MCF 10A (cell line): ENCODE measurements at regions of chr7 and their contacts with region 1.

Region 1: GRCh38 chr7:120792091-120792860 is 65.7 kb downstream of the TSPAN12 start:
- DNase-seq: peak; percentile 76
- H3K4me3 Mint-ChIP-seq: no peak overlapping the region
- H3K27ac Mint-ChIP-seq: no peak overlapping the region
- H3K4me1 Mint-ChIP-seq: peaks cover 11% of the 10 kb centered on the region
- H3K27me3 Mint-ChIP-seq: peaks cover 27% of the 10 kb centered on the region
- CTCF ChIP-seq: peak; percentile 84

Region 2: GRCh38 chr7:120813089-120813488 is 20.8 kb after region 1 on chr7:
- CTCF ChIA-PET with region 1: interaction called, 112 read pairs
- POLR2A ChIA-PET with region 1: no interaction called
- intact Hi-C with region 1: no loop called
- DNase-seq: no peak
- H3K4me3 Mint-ChIP-seq: no peak overlapping the region
- H3K27ac Mint-ChIP-seq: no peak overlapping the region
- H3K4me1 Mint-ChIP-seq: no peaks in the 10 kb centered on the region
- H3K27me3 Mint-ChIP-seq: peaks cover 64% of the 10 kb centered on the region
- CTCF ChIP-seq: no peak

Region 3: DNA sequence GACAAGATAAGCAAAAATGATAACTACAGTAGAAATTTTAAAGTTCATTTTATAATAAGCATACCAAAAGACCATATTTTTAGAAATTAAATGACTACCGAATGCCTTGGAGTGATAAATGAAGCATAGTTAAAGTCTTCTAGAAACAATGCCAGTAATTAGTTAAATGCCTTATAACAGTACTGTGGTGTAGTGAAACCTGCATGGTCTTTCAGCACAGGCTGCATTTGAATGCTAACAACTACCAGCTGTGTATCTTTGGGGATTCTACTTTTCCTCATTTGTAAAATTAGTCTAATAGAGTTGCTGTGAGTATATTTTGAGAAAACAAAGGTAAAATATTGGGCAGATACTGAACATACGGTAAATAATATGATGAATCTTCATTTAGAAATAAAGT is 40.5 kb after region 1 on chr7:
- CTCF ChIA-PET with region 1: no interaction called
- POLR2A ChIA-PET with region 1: no interaction called
- intact Hi-C with region 1: no loop called
- DNase-seq: no peak
- H3K4me3 Mint-ChIP-seq: no peak overlapping the region
- H3K27ac Mint-ChIP-seq: no peak overlapping the region
- H3K4me1 Mint-ChIP-seq: no peaks in the 10 kb centered on the region
- H3K27me3 Mint-ChIP-seq: peaks cover 77% of the 10 kb centered on the region
- CTCF ChIP-seq: no peak

Region 4: GRCh38 chr7:120857588-120858573 is 65.6 kb after region 1 on chr7 and contains the start of gene TSPAN12:
- CTCF ChIA-PET with region 1: no interaction called
- POLR2A ChIA-PET with region 1: no interaction called
- intact Hi-C with region 1: loop called (anchors 2 kb)
- DNase-seq: peak; percentile 52
- H3K4me3 Mint-ChIP-seq: peak within 1 kb of the TSS; percentile 80
- H3K27ac Mint-ChIP-seq: no peak within 1 kb of the TSS
- H3K4me1 Mint-ChIP-seq: no peaks in the 10 kb centered on the region
- H3K27me3 Mint-ChIP-seq: peaks cover 98% of the 10 kb centered on the region
- CTCF ChIP-seq: peak; percentile 35
- total RNA-seq, gene TSPAN12: not detected in 2 replicates

Region 5: DNA sequence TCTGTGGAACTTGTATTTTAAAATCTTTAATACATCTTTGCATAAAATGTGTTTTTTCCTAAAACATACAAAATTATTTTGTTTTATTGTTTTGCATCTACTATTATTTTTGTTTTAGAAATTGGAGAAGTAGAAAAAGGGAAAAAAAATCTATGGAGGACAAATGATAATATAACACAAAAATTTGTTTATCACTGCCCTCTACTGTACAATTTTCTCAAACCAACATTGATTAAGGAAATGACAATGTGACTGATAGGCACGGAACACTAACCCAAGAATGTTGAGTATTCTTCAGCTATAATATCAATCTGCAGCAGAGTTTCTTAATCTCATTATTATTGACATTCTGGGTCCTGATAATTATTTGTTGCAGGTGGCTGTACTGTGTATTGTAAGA is 148.8 kb after region 1 on chr7:
- CTCF ChIA-PET with region 1: interaction called, 9 read pairs
- POLR2A ChIA-PET with region 1: no interaction called
- intact Hi-C with region 1: loop called (anchors 2 kb)
- DNase-seq: peak; percentile 16
- H3K4me3 Mint-ChIP-seq: no peak overlapping the region
- H3K27ac Mint-ChIP-seq: no peak overlapping the region
- H3K4me1 Mint-ChIP-seq: no peaks in the 10 kb centered on the region
- H3K27me3 Mint-ChIP-seq: peaks cover 80% of the 10 kb centered on the region
- CTCF ChIP-seq: no peak

Region 6: GRCh38 chr7:121081327-121081936 is 289.2 kb after region 1 on chr7:
- CTCF ChIA-PET with region 1: interaction called, 30 read pairs
- POLR2A ChIA-PET with region 1: no interaction called
- intact Hi-C with region 1: no loop called
- DNase-seq: peak; percentile 71
- H3K4me3 Mint-ChIP-seq: no peak overlapping the region
- H3K27ac Mint-ChIP-seq: no peak overlapping the region
- H3K4me1 Mint-ChIP-seq: peaks cover 29% of the 10 kb centered on the region
- H3K27me3 Mint-ChIP-seq: no peaks in the 10 kb centered on the region
- CTCF ChIP-seq: peak; percentile 52

Region 7: GRCh38 chr7:121107923-121108498 is 315.7 kb after region 1 on chr7:
- CTCF ChIA-PET with region 1: interaction called, 10 read pairs
- POLR2A ChIA-PET with region 1: no interaction called
- intact Hi-C with region 1: loop called (anchors 2 kb)
- DNase-seq: peak; percentile 70
- H3K4me3 Mint-ChIP-seq: no peak overlapping the region
- H3K27ac Mint-ChIP-seq: no peak overlapping the region
- H3K4me1 Mint-ChIP-seq: no peaks in the 10 kb centered on the region
- H3K27me3 Mint-ChIP-seq: peaks cover 38% of the 10 kb centered on the region
- CTCF ChIP-seq: peak; percentile 57